Naive thymus-derived CD4-positive, alpha-beta T cell (primary cell): ENCODE measurements at regions of chr9 and their contacts with region 1.

Region 1: DNA sequence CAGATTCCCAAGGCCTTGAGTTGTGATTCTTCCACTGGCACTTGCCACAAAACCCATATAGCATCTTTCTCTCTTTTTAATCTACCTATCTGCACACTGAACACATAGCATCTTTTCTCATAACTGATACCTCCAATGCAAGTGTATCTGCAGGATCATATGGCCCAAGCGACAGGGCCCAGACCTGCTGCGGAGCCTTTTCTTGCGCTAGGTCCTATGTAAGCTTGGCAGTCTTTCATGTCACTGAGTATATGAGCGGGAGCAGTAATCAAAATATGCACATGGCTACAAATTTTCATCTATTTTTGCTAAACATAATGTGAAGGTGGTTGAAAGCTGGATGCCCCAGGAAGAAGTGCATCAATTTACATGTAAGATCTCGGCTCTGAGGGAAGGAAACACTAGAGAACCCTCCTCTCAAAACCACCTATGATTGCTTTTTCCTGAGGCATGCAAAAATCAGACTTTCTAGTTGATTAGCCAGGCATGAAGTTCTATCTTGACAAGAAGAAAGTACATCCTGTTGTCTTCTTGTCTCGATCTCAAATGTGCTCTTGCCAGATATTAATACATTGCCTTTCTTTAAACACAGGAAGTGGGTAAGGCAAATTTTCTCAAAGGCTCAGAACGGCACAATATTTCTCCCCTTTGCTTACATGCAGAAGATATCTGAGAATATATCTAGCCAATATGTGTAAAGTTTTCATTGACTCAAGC is 26.9 kb upstream of the CEMIP2 start:
- DNase-seq: peak in 7 of 9 donors; percentile 68 to 90 (median 85)
- ATAC-seq: peak; percentile 92
- H3K4me3 ChIP-seq: peak overlapping the region; percentile 17
- H3K4me3 Mint-ChIP-seq: peak overlapping the region; percentile 26 to 90 (median 76)
- H3K27ac ChIP-seq: peak overlapping the region; percentile 71
- H3K27ac Mint-ChIP-seq: peak overlapping the region; percentile 91 to 99 (median 96)
- H3K4me1 ChIP-seq: peaks cover 36 to 63% of the 10 kb centered on the region in 2 donors
- H3K4me1 Mint-ChIP-seq: peaks cover 44 to 87% (median 76%) of the 10 kb centered on the region in 7 donors
- H3K27me3 ChIP-seq: no peaks in the 10 kb centered on the region
- H3K27me3 Mint-ChIP-seq: no peaks in the 10 kb centered on the region

Region 2: GRCh38 chr9:70672161-70672649 is 1123.0 kb before region 1 on chr9:
- CTCF ChIA-PET with region 1: no interaction called
- POLR2A ChIA-PET with region 1: no interaction called
- intact Hi-C with region 1: no loop called
- DNase-seq: no peak
- ATAC-seq: no peak
- H3K4me3 ChIP-seq: no peak overlapping the region
- H3K4me3 Mint-ChIP-seq: no peak overlapping the region
- H3K27ac ChIP-seq: no peak overlapping the region
- H3K27ac Mint-ChIP-seq: no peak overlapping the region
- H3K4me1 ChIP-seq: no peaks in the 10 kb centered on the region
- H3K4me1 Mint-ChIP-seq: no peaks in the 10 kb centered on the region
- H3K27me3 ChIP-seq: no peaks in the 10 kb centered on the region
- H3K27me3 Mint-ChIP-seq: peaks cover 0 to 5% (median 5%) of the 10 kb centered on the region in 5 donors

Region 3: DNA sequence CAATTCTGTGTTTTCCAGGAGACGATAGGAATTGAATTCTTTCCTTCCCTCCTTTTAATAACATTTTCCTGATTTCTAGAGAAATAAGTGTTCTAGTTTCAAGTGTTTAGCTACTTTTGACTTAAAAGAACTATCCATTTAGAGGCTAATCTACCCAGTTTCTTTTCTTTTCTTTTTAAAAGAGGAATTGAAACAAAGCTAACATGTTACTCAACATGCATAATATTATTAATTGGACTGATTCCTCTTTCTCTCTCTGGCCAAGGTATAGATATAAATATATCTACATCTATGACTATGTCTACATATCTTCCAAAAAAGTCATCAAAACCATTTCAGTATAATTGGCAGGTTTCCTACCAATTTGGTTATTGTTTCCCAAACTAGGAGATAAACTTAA is 983.6 kb before region 1 on chr9:
- CTCF ChIA-PET with region 1: no interaction called
- POLR2A ChIA-PET with region 1: no interaction called
- intact Hi-C with region 1: no loop called
- DNase-seq: no peak
- ATAC-seq: no peak
- H3K4me3 ChIP-seq: no peak overlapping the region
- H3K4me3 Mint-ChIP-seq: no peak overlapping the region
- H3K27ac ChIP-seq: no peak overlapping the region
- H3K27ac Mint-ChIP-seq: no peak overlapping the region
- H3K4me1 ChIP-seq: no peaks in the 10 kb centered on the region
- H3K4me1 Mint-ChIP-seq: no peaks in the 10 kb centered on the region
- H3K27me3 ChIP-seq: no peaks in the 10 kb centered on the region
- H3K27me3 Mint-ChIP-seq: peaks cover 2 to 26% (median 12%) of the 10 kb centered on the region in 5 donors

Region 4: GRCh38 chr9:71778085-71778484 is 17.2 kb before region 1 on chr9:
- CTCF ChIA-PET with region 1: interaction called, 63 read pairs
- POLR2A ChIA-PET with region 1: interaction called, 147 read pairs
- intact Hi-C with region 1: loop called (anchors 1 kb)
- DNase-seq: no peak
- ATAC-seq: no peak
- H3K4me3 ChIP-seq: no peak overlapping the region
- H3K4me3 Mint-ChIP-seq: no peak overlapping the region
- H3K27ac ChIP-seq: no peak overlapping the region
- H3K27ac Mint-ChIP-seq: peak overlapping the region in 4 of 9 donors; percentile 1 to 84 (median 58)
- H3K4me1 ChIP-seq: peaks cover 25 to 27% of the 10 kb centered on the region in 2 donors
- H3K4me1 Mint-ChIP-seq: peaks cover 13 to 48% (median 41%) of the 10 kb centered on the region in 7 donors
- H3K27me3 ChIP-seq: no peaks in the 10 kb centered on the region
- H3K27me3 Mint-ChIP-seq: no peaks in the 10 kb centered on the region

Region 5: DNA sequence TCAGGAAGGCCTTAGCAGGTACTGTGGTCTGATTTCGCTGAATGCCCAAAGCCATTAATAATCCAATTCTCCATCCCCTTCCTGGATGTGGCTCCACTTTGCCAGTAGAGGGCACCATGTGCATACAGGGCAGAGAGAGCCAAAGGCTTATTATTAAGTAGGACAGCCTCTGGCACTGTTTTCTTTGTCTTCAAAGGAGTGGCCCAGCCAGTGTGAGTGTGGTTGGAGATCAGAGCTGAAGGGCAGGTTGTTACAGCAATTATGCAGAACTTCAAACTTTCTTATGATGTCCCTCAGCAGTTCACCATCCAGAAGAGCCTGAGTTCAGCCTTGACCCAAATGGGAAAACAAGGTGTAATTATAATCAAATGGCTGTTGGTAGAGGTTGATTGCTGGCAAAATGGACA is 11.6 kb after region 1 on chr9:
- CTCF ChIA-PET with region 1: interaction called, 29 read pairs
- POLR2A ChIA-PET with region 1: interaction called, 28 read pairs
- intact Hi-C with region 1: loop called in 1 of 2 experiments (anchors 1 kb)
- DNase-seq: peak in 8 of 9 donors; percentile 20 to 65 (median 50)
- ATAC-seq: peak; percentile 98
- H3K4me3 ChIP-seq: no peak overlapping the region
- H3K4me3 Mint-ChIP-seq: no peak overlapping the region
- H3K27ac ChIP-seq: no peak overlapping the region
- H3K27ac Mint-ChIP-seq: peak overlapping the region in 7 of 9 donors; percentile 19 to 85 (median 65)
- H3K4me1 ChIP-seq: peaks cover 0 to 7% of the 10 kb centered on the region in 2 donors
- H3K4me1 Mint-ChIP-seq: peaks cover 0 to 21% (median 10%) of the 10 kb centered on the region in 7 donors
- H3K27me3 ChIP-seq: no peaks in the 10 kb centered on the region
- H3K27me3 Mint-ChIP-seq: peaks cover 0 to 3% (median 0%) of the 10 kb centered on the region in 5 donors

Region 6: DNA sequence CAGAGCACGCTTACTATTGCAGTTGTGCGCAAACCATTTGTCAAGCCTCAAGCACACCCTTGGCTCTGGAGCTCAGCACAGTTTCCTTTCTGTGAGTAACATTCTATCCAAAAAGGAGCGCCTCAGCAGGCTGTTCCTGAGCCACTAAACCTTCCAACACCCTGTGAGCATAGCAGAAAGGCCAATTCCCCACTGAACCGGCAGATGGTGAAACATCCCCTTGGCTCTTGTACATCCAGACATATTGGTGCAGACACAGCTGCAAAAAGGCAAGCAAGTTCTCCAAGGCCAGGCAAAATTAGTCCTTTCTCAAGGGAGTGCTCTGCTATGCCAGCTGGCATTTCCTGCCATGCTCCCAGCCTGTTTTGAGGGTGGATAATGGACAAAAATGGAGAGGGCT is 17.1 kb after region 1 on chr9:
- CTCF ChIA-PET with region 1: interaction called, 40 read pairs
- POLR2A ChIA-PET with region 1: interaction called, 28 read pairs
- intact Hi-C with region 1: loop called in 1 of 2 experiments (anchors 1 kb)
- DNase-seq: no peak
- ATAC-seq: no peak
- H3K4me3 ChIP-seq: no peak overlapping the region
- H3K4me3 Mint-ChIP-seq: no peak overlapping the region
- H3K27ac ChIP-seq: no peak overlapping the region
- H3K27ac Mint-ChIP-seq: peak overlapping the region in 1 of 9 donors; percentile 25
- H3K4me1 ChIP-seq: peaks cover 4 to 7% of the 10 kb centered on the region in 2 donors
- H3K4me1 Mint-ChIP-seq: peaks cover 6 to 30% (median 16%) of the 10 kb centered on the region in 7 donors
- H3K27me3 ChIP-seq: no peaks in the 10 kb centered on the region
- H3K27me3 Mint-ChIP-seq: peaks cover 0 to 3% (median 0%) of the 10 kb centered on the region in 5 donors

Region 7: DNA sequence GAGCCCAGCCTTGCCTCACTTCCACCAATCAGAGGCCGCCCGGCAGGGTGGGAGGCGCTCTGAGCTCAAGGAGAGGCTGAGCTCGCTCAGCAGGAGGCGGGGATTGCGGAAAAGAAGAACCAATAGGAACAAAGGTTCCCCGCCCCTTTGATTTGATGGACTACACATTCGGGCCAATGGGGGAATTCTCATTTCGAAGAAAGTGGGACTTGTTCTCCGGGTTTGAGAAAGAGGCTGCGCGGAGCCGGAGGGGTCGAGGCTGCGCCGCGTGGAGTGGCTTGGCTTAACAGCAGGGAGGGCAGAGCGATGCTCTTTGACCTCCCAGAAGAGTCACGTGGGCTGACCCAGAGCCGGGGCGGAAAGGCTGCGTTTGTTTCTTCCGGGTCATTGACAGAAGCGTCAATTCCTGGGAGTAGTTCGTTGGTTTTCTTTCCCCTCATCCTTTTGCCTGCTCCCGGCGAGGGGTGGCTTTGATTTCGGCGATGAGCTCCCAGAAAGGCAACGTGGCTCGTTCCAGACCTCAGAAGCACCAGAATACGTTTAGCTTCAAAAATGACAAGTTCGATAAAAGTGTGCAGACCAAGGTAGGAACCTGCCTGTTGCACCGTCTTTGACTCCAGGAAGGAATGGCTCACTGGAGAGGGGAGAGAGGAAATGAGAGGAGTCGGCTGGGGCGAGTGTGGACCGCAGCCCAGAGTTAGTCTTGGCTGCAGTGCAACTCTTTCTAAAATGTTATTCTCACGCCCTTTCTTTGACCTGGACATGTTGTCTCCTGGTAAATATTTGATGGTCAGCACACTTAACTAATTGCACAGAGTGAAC is 116.2 kb after region 1 on chr9 and contains the start of gene C9orf85:
- CTCF ChIA-PET with region 1: no interaction called
- POLR2A ChIA-PET with region 1: interaction called, 4 read pairs
- intact Hi-C with region 1: loop called in 1 of 2 experiments (anchors 1 kb)
- DNase-seq: peak; percentile 84 to 98 (median 95)
- ATAC-seq: peak; percentile 96
- H3K4me3 ChIP-seq: peak within 1 kb of the TSS; percentile 83
- H3K4me3 Mint-ChIP-seq: peak within 1 kb of the TSS; percentile 95 to 100 (median 100)
- H3K27ac ChIP-seq: peak within 1 kb of the TSS; percentile 74
- H3K27ac Mint-ChIP-seq: peak within 1 kb of the TSS; percentile 90 to 99 (median 95)
- H3K4me1 ChIP-seq: peaks cover 15 to 22% of the 10 kb centered on the region in 2 donors
- H3K4me1 Mint-ChIP-seq: peaks cover 47 to 80% (median 67%) of the 10 kb centered on the region in 7 donors
- H3K27me3 ChIP-seq: peaks cover 0 to 3% of the 10 kb centered on the region in 2 donors
- H3K27me3 Mint-ChIP-seq: no peaks in the 10 kb centered on the region
- total RNA-seq, gene C9orf85: 4.8 to 10.3 (median 8.6) TPM

Region 8: DNA sequence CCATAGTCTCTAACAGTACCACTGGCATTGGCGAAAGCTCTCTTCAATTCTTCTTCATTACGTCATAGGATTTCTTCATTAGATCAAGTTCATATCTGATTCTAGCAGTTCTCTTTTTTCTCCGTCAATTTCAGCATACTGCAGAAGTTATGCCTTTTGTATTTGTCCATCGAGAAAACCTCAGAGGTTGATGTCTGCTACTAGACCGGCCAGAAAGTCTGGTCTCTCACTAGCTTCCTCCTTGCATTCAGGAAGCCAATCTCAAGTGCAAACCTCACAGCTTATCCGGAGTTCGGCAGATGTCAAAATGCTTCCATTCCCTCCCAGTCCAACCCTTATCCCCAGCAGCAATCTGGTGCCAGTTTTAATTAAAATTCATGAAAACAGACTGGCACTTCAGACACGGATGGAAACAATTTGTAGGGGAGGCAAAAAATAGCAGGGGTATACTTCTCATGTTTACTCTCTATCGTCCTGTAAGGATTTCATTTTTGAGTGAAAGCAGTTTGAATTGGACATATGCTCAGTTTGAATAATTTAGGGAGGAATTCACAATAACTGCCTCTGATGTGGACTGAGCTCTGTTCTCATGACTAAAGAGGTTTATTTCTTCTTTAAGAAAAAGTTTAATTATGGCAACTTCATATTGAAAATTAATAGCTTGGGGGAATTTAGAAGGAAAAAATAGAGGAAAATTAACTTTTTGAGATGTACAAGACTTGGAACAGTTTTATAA is 669.8 kb after region 1 on chr9:
- CTCF ChIA-PET with region 1: no interaction called
- POLR2A ChIA-PET with region 1: no interaction called
- intact Hi-C with region 1: no loop called
- DNase-seq: no peak
- ATAC-seq: peak; percentile 87
- H3K4me3 ChIP-seq: no peak overlapping the region
- H3K4me3 Mint-ChIP-seq: peak overlapping the region in 8 of 10 donors; percentile 8 to 54 (median 30)
- H3K27ac ChIP-seq: no peak overlapping the region
- H3K27ac Mint-ChIP-seq: peak overlapping the region in 3 of 9 donors; percentile 1 to 33 (median 3)
- H3K4me1 ChIP-seq: no peaks in the 10 kb centered on the region
- H3K4me1 Mint-ChIP-seq: peaks cover 4 to 16% (median 8%) of the 10 kb centered on the region in 7 donors
- H3K27me3 ChIP-seq: no peaks in the 10 kb centered on the region
- H3K27me3 Mint-ChIP-seq: peaks cover 0 to 4% (median 0%) of the 10 kb centered on the region in 5 donors